Activated CD4-positive, alpha-beta T cell treated with anti-CD3 and anti-CD28 coated beads for 36 hours (primary cell): ENCODE measurements at regions of chr2 and their contacts with region 1.

Region 1: GRCh38 chr2:30421604-30422443 is 25.2 kb upstream of the LCLAT1 start:
- DNase-seq: peak; percentile 48
- ATAC-seq: peak; percentile 57
- H3K4me3 Mint-ChIP-seq: peak overlapping the region; percentile 68
- H3K27ac Mint-ChIP-seq: peak overlapping the region; percentile 96
- H3K4me1 Mint-ChIP-seq: peaks cover 48% of the 10 kb centered on the region
- H3K27me3 Mint-ChIP-seq: no peaks in the 10 kb centered on the region

Region 2: DNA sequence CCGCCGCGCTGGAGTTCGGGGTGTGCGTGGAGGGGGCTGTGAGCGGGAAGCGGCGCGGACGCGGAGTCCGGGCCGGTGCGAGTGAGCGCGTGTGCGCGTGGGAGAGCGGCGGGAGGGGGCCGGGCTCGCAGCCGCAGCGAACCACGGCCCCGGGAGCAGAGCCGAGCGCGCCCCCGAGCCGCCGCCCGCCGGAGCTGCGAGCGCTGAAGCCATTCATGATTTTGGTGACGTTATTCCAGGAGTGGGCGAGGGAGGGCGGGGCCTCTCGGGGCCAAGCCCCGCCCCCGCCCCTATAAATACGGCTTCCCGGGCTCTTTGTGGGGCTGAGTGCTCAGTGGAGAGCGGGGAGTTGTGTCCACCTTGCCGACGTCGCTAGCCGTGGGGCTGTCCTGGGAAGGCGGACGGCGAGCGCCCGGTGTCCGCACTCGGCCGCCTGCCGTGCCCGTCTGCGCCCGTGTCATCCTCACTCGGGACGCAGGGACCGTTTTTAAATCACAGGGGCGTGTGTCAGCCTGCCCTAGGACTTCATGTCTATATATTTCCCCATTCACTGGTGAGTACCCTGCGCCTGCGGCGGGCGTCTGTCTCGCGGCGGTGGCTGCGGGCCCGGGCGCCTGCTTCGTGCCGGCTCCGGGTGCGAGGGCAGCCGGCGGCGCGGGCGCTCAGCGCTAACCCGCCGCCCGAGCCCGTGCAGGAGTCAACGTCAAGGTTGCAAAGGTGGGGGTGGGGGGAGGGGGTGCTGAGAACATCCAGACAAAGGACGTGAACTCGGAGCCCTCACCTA is 190.4 kb before region 1 on chr2 and contains the start of gene LBH:
- CTCF ChIA-PET with region 1: interaction called, 5 read pairs
- POLR2A ChIA-PET with region 1: interaction called, 22 read pairs
- intact Hi-C with region 1: loop called (anchors 1 kb)
- DNase-seq: peak; percentile 94
- ATAC-seq: peak; percentile 41
- H3K4me3 Mint-ChIP-seq: peak within 1 kb of the TSS; percentile 76
- H3K27ac Mint-ChIP-seq: peak within 1 kb of the TSS; percentile 93
- H3K4me1 Mint-ChIP-seq: peaks cover 65% of the 10 kb centered on the region
- H3K27me3 Mint-ChIP-seq: peaks cover 10% of the 10 kb centered on the region
- total RNA-seq, gene LBH: 89.6 to 108 TPM

Region 3: GRCh38 chr2:30266051-30266621 is 155.7 kb before region 1 on chr2:
- CTCF ChIA-PET with region 1: interaction called, 3 read pairs
- POLR2A ChIA-PET with region 1: interaction called, 5 read pairs
- intact Hi-C with region 1: loop called in 1 of 2 experiments (anchors 1 kb)
- DNase-seq: peak; percentile 69
- ATAC-seq: peak; percentile 45
- H3K4me3 Mint-ChIP-seq: peak overlapping the region; percentile 75
- H3K27ac Mint-ChIP-seq: peak overlapping the region; percentile 98
- H3K4me1 Mint-ChIP-seq: peaks cover 83% of the 10 kb centered on the region
- H3K27me3 Mint-ChIP-seq: no peaks in the 10 kb centered on the region

Region 4: DNA sequence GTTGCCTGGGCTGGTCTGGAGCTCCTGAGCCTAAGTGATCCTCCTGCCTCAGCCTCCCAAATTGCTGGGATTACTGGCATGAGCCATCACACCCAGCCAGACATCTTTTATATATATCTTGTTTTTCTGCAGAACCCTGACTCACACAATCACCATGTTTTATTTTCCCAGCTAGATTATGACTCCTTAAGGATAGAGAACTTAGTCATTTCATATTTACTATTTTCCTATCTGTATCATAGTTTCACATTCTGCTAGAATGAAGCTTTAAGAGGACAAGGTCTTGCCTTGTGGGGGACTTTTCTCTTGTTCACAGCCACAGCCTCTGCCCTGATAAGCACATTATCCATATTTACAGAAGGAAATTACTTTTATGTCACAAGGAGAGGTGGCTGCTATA is 116.6 kb before region 1 on chr2:
- CTCF ChIA-PET with region 1: interaction called, 5 read pairs
- POLR2A ChIA-PET with region 1: interaction called, 4 read pairs
- intact Hi-C with region 1: loop called in 1 of 2 experiments (anchors 1 kb)
- DNase-seq: no peak
- ATAC-seq: peak; percentile 73
- H3K4me3 Mint-ChIP-seq: no peak overlapping the region
- H3K27ac Mint-ChIP-seq: no peak overlapping the region
- H3K4me1 Mint-ChIP-seq: peaks cover 30% of the 10 kb centered on the region
- H3K27me3 Mint-ChIP-seq: no peaks in the 10 kb centered on the region

Region 5: DNA sequence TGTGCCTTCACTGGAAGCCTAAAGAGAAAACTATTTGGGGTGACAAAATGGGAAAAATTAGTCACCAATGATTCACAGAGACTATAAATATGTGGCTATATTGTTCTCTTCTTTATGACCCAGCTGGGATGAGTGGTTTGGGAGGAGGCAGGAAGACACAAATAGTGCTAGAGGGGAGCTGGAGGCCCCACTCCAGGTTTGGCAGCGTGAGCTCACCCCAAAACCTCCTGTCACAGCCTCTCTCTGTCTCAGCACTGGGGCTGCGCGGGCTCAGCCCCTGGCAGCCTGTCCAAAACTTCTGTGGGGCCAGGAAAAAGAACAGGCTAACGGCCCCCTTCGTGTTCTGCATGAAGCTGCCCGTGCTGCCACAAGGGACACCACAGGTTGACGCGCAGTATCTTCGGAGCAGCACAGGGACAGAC is 47.9 kb before region 1 on chr2:
- CTCF ChIA-PET with region 1: interaction called, 3 read pairs
- POLR2A ChIA-PET with region 1: interaction called, 4 read pairs
- intact Hi-C with region 1: loop called in 1 of 2 experiments (anchors 5 kb)
- DNase-seq: peak; percentile 32
- ATAC-seq: no peak
- H3K4me3 Mint-ChIP-seq: no peak overlapping the region
- H3K27ac Mint-ChIP-seq: peak overlapping the region; percentile 44
- H3K4me1 Mint-ChIP-seq: peaks cover 39% of the 10 kb centered on the region
- H3K27me3 Mint-ChIP-seq: no peaks in the 10 kb centered on the region

Region 6: GRCh38 chr2:30393510-30393909 is 28.3 kb before region 1 on chr2:
- CTCF ChIA-PET with region 1: no interaction called
- POLR2A ChIA-PET with region 1: no interaction called
- intact Hi-C with region 1: no loop called
- DNase-seq: no peak
- ATAC-seq: no peak
- H3K4me3 Mint-ChIP-seq: no peak overlapping the region
- H3K27ac Mint-ChIP-seq: no peak overlapping the region
- H3K4me1 Mint-ChIP-seq: no peaks in the 10 kb centered on the region
- H3K27me3 Mint-ChIP-seq: no peaks in the 10 kb centered on the region

Region 7: GRCh38 chr2:30403592-30404312 is 18.1 kb before region 1 on chr2:
- CTCF ChIA-PET with region 1: no interaction called
- POLR2A ChIA-PET with region 1: no interaction called
- intact Hi-C with region 1: no loop called
- DNase-seq: no peak
- ATAC-seq: no peak
- H3K4me3 Mint-ChIP-seq: no peak overlapping the region
- H3K27ac Mint-ChIP-seq: no peak overlapping the region
- H3K4me1 Mint-ChIP-seq: peaks cover 21% of the 10 kb centered on the region
- H3K27me3 Mint-ChIP-seq: no peaks in the 10 kb centered on the region

Region 8: GRCh38 chr2:30447149-30448045 is 25.6 kb after region 1 on chr2 and contains the start of gene LCLAT1:
- CTCF ChIA-PET with region 1: interaction called, 6 read pairs
- POLR2A ChIA-PET with region 1: interaction called, 7 read pairs
- intact Hi-C with region 1: loop called (anchors 1 kb)
- DNase-seq: peak; percentile 91
- ATAC-seq: peak; percentile 80
- H3K4me3 Mint-ChIP-seq: peak within 1 kb of the TSS; percentile 87
- H3K27ac Mint-ChIP-seq: peak within 1 kb of the TSS; percentile 96
- H3K4me1 Mint-ChIP-seq: peaks cover 32% of the 10 kb centered on the region
- H3K27me3 Mint-ChIP-seq: no peaks in the 10 kb centered on the region
- total RNA-seq, gene LCLAT1: 18.5 to 21.7 TPM